HepG2 (cell line): ENCODE measurements at regions of chr6 and their contacts with region 1.

Region 1: DNA sequence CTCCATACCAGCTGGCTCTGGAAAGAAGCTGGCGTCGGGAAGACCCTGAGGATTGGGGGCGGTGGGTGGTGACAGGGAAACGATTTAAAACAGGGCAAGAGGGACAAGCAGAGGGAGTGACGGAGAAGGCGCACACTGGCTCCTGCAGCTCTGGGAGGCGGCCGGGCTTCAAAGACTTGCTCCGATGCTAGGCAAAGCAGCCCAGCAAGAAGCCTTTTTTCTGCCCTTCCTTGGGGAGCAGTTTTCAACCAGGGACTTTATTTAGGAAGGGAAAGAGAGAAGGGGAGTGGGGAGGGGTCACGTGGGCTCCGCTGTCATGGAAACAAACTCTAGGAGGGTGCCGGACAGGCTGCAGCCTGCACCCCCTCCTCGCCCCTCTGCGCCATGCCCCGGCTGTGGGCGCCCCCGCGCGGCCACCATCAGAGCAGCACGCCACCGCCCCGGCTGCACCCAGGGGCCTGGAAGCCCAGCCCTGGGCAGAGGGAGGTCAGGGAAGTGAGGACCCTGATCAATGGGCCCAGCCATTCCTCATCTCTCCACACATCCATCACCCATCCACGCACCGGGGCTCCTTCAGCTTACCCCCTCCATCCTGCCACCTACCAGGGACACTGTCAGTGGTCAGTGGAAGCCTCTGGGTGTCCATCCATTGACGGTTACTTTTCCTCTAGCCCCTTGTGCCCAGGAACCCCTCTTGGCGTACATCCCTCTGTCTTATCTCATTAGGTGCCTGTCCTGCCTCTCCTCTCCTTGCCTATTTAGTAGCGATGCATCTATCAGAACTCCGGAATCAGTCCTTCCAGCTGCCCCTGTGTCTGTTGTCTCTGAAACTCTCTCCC is 66.6 kb upstream of the CCDC167 start:
- DNase-seq: no peak
- ATAC-seq: peak; percentile 92
- H3K4me3 ChIP-seq: no peak overlapping the region
- H3K27ac ChIP-seq: no peak overlapping the region
- H3K4me1 ChIP-seq: no peaks in the 10 kb centered on the region
- H3K27me3 ChIP-seq: peaks cover 16 to 77% of the 10 kb centered on the region in 2 experiments
- CTCF ChIP-seq: peak; percentile 93
- EP300 ChIP-seq: no peak
- POLR2A ChIP-seq: no peak
- RAD21 ChIP-seq: peak; percentile 90

Region 2: GRCh38 chr6:37473397-37474095 is 92.8 kb before region 1 on chr6:
- CTCF ChIA-PET with region 1: no interaction called
- POLR2A ChIA-PET with region 1: no interaction called
- in situ Hi-C with region 1: no loop called
- intact Hi-C with region 1: no loop called
- DNase-seq: no peak
- ATAC-seq: no peak
- H3K4me3 ChIP-seq: no peak overlapping the region
- H3K27ac ChIP-seq: no peak overlapping the region
- H3K4me1 ChIP-seq: no peaks in the 10 kb centered on the region
- H3K27me3 ChIP-seq: no peaks in the 10 kb centered on the region
- CTCF ChIP-seq: no peak
- EP300 ChIP-seq: no peak
- POLR2A ChIP-seq: no peak
- RAD21 ChIP-seq: no peak

Region 3: GRCh38 chr6:37483917-37484785 is 82.2 kb before region 1 on chr6:
- CTCF ChIA-PET with region 1: interaction called, 28 read pairs
- POLR2A ChIA-PET with region 1: no interaction called
- in situ Hi-C with region 1: loop called (anchors 5 kb)
- intact Hi-C with region 1: loop called (anchors 1 kb)
- DNase-seq: peak; percentile 18
- ATAC-seq: peak; percentile 87
- H3K4me3 ChIP-seq: no peak overlapping the region
- H3K27ac ChIP-seq: no peak overlapping the region
- H3K4me1 ChIP-seq: no peaks in the 10 kb centered on the region
- H3K27me3 ChIP-seq: no peaks in the 10 kb centered on the region
- CTCF ChIP-seq: peak; percentile 92
- EP300 ChIP-seq: no peak
- POLR2A ChIP-seq: no peak
- RAD21 ChIP-seq: peak; percentile 89

Region 4: DNA sequence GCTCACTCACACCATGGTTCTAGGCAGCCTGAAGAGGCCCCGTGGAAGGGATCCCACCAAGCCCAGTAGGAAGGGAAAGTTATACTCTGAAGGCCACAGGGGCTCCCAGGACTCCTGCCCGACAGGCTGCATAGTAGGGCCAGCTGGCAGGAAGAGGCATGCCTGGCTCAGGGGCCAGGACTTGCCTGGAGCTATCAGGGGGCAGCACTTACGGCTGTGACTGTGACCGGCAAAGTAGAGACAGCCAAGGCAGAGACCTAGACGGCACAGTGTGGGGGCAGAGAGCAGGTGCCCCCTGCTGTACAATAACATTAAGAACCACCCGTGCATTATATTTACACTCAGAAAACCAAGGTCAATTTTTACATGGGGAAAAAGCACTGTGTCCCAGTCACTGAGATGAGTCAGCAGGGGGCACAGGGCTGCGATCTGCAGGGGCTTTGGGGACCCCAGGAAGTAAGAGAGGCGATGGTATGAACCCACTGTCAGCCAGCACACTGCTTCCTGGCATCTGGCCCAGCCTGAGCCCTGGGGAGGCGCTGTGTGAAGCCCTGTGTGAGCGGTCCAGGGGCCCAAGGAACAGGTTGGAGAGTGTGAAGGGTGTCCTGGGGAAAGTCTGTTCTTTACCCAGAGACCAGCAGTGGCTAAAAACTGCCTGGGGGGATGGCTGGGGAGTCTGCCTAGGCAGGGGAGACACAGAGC is 76.5 kb before region 1 on chr6:
- CTCF ChIA-PET with region 1: interaction called, 28 read pairs
- POLR2A ChIA-PET with region 1: no interaction called
- in situ Hi-C with region 1: loop called (anchors 5 kb)
- intact Hi-C with region 1: no loop called
- DNase-seq: peak; percentile 39
- ATAC-seq: peak; percentile 69
- H3K4me3 ChIP-seq: no peak overlapping the region
- H3K27ac ChIP-seq: no peak overlapping the region
- H3K4me1 ChIP-seq: peaks cover 11% of the 10 kb centered on the region
- H3K27me3 ChIP-seq: no peaks in the 10 kb centered on the region
- CTCF ChIP-seq: peak; percentile 53
- EP300 ChIP-seq: no peak
- POLR2A ChIP-seq: no peak
- RAD21 ChIP-seq: no peak; the same call in 1 of the 2 replicates

Region 5: DNA sequence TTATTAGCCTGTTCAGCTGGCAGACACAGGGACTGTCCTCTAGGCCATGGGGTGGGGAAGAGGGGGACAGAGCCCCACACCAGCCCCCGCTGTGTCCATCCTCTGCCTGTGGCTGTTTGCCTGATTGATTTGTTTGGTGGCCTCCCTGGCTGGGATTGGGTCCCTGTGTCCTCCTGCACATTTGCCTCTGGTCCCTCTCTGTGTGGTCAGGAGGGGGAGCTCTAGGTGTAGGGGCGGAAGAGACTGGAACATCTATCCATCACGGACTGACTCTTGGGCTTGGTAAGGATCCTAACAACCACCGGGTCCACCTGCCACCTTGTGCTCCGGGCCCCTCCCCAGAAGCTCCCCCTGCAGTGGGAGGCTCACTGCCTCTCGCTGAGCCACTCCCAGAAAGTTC is 28.2 kb before region 1 on chr6:
- CTCF ChIA-PET with region 1: interaction called, 4 read pairs
- POLR2A ChIA-PET with region 1: no interaction called
- in situ Hi-C with region 1: no loop called
- intact Hi-C with region 1: loop called (anchors 1 kb)
- DNase-seq: peak; percentile 39
- ATAC-seq: peak; percentile 90
- H3K4me3 ChIP-seq: no peak overlapping the region
- H3K27ac ChIP-seq: no peak overlapping the region
- H3K4me1 ChIP-seq: no peaks in the 10 kb centered on the region
- H3K27me3 ChIP-seq: peaks cover 1 to 59% of the 10 kb centered on the region in 2 experiments; a peak in 4 of 5 replicates
- CTCF ChIP-seq: peak; percentile 83
- EP300 ChIP-seq: no peak
- POLR2A ChIP-seq: no peak
- RAD21 ChIP-seq: peak; percentile 66